H1 (cell line): ENCODE measurements at regions of chr20 and their contacts with region 1.

Region 1: DNA sequence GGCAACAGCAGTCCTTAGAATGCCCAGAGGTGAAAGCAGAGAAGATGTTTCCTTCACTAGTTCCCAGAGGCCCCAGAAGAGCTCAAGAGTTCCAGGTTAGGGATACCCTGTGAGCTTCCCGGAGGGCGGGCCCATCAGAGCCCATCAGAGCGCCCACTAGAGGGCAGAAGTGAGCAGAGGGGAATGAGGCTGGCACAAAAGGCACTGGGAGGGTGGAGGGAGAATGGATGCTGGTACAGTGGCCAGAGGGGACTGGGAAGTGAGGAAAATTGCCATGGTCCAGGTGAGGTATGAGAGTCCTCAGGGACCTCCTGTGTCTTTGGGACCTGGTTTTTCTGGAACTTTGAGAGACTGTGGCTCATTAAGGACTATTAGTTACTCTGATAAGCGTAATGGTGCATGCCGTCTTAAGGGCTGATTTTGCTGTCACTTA is 57.3 kb downstream of the LINC00237 start:
- DNase-seq: peak in 1 of 2 experiments; percentile 96
- H3K4me3 ChIP-seq: no peak overlapping the region
- H3K27ac ChIP-seq: no peak overlapping the region
- H3K4me1 ChIP-seq: peaks cover 5 to 13% (median 10%) of the 10 kb centered on the region in 4 experiments; a peak in 6 of 7 replicates
- H3K27me3 ChIP-seq: no peaks in the 10 kb centered on the region
- CTCF ChIP-seq: peak; percentile 81 to 91 (median 90)
- EP300 ChIP-seq: no peak
- POLR2A ChIP-seq: no peak
- RAD21 ChIP-seq: peak; percentile 83 to 86

Region 2: GRCh38 chr20:20904501-20904831 is 144.4 kb before region 1 on chr20:
- CTCF ChIA-PET with region 1: interaction called, 10 read pairs
- POLR2A ChIA-PET with region 1: no interaction called
- DNase-seq: no peak
- H3K4me3 ChIP-seq: no peak overlapping the region
- H3K27ac ChIP-seq: no peak overlapping the region
- H3K4me1 ChIP-seq: no peaks in the 10 kb centered on the region
- H3K27me3 ChIP-seq: no peaks in the 10 kb centered on the region
- CTCF ChIP-seq: no peak
- EP300 ChIP-seq: no peak
- POLR2A ChIP-seq: no peak
- RAD21 ChIP-seq: no peak

Region 3: GRCh38 chr20:21090111-21090618 is 41.3 kb after region 1 on chr20:
- CTCF ChIA-PET with region 1: interaction called, 12 read pairs
- POLR2A ChIA-PET with region 1: no interaction called
- DNase-seq: no peak
- H3K4me3 ChIP-seq: peak overlapping the region in 1 of 4 experiments; percentile 28; a peak in 1 of 8 replicates
- H3K27ac ChIP-seq: no peak overlapping the region
- H3K4me1 ChIP-seq: peaks cover 3 to 25% (median 17%) of the 10 kb centered on the region in 4 experiments; a peak in 6 of 7 replicates
- H3K27me3 ChIP-seq: no peaks in the 10 kb centered on the region
- CTCF ChIP-seq: no peak
- EP300 ChIP-seq: no peak
- POLR2A ChIP-seq: no peak
- RAD21 ChIP-seq: no peak

Region 4: GRCh38 chr20:21125849-21126580 is 77.2 kb after region 1 on chr20 and contains the start of gene KIZ:
- CTCF ChIA-PET with region 1: interaction called, 14 read pairs
- POLR2A ChIA-PET with region 1: interaction called, 3 read pairs
- DNase-seq: peak; percentile 90 to 100
- H3K4me3 ChIP-seq: peak within 1 kb of the TSS; percentile 60 to 98 (median 78)
- H3K27ac ChIP-seq: 0 out of 2 replicates have a peak within 1 kb of the TSS, but pooled peaks have one; percentile 37
- H3K4me1 ChIP-seq: peaks cover 2 to 8% (median 7%) of the 10 kb centered on the region in 4 experiments; a peak in 5 of 7 replicates
- H3K27me3 ChIP-seq: no peaks in the 10 kb centered on the region
- CTCF ChIP-seq: peak; percentile 25 to 51 (median 46)
- EP300 ChIP-seq: no peak
- POLR2A ChIP-seq: peak in 1 of 2 experiments; percentile 79; a peak in 2 of 3 replicates
- RAD21 ChIP-seq: peak in 1 of 2 experiments; percentile 52; a peak in 2 of 4 replicates
- total RNA-seq, gene KIZ: 47.9 and 51.7 TPM in 2 replicates

Region 5: GRCh38 chr20:21291026-21291425 is 242.2 kb after region 1 on chr20:
- CTCF ChIA-PET with region 1: no interaction called
- POLR2A ChIA-PET with region 1: no interaction called
- DNase-seq: no peak
- H3K4me3 ChIP-seq: no peak overlapping the region
- H3K27ac ChIP-seq: no peak overlapping the region
- H3K4me1 ChIP-seq: no peaks in the 10 kb centered on the region
- H3K27me3 ChIP-seq: no peaks in the 10 kb centered on the region
- CTCF ChIP-seq: no peak
- EP300 ChIP-seq: no peak
- POLR2A ChIP-seq: no peak
- RAD21 ChIP-seq: no peak